ENCODE measurements at regions of chr6 and their contacts with region 1.

Region 1: GRCh38 chr6:30678964-30679726 is 6.3 kb upstream of the DHX16 start:
- DNase-seq: peak; percentile 91 to 93 (median 92)
- ATAC-seq: peak; percentile 75 to 85 (median 82)
- H3K4me3 ChIP-seq: peak overlapping the region; percentile 24 to 34 (median 26)
- H3K27ac ChIP-seq: peak overlapping the region; percentile 60 to 94 (median 84)
- H3K4me1 ChIP-seq: peaks cover 0 to 67% (median 28%) of the 10 kb centered on the region in 4 donors
- H3K27me3 ChIP-seq: no peaks in the 10 kb centered on the region
- CTCF ChIP-seq: peak; percentile 95 to 99 (median 97)
- POLR2A ChIP-seq: peak; percentile 36

Region 2: DNA sequence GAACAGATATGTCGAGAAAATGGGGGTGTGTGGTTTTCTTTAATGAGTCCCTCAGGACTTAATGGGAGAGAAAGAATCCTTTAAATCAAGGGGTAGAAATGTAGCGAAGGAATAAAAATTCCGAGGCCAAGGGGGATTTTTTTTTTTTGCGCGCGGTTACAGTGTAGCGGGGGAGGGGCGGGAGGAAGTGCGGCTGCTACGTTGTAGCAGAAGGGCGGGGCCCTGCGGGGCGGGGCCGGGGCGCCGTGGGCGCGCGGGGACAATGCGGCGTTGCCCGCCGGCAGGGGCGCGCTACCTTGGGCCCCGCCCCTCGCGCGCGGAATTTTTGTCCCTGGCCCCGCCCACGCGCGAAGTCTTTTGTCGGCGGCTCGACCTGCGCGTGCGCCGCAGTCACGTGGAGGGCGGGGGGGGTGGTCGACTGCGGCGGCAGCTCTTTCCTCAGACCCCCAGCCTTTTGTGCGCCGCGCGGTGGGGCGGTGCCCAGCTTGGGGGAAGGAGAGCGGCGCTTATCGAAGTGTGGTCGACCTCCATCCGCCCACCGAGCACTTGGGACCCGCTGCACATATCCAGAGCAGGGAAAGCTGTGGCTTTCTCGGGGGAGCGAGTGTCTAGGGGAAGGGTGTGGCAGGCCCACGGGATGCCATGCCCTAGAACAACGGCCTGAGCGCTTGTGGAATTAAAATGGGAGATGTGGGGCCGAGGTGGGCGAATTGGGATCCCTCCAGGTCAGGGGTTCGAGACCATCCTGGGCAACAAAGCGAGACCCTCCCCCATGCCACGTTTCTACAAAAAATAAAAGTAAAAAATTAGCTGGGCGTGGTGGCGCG is 42.3 kb after region 1 on chr6:
- intact Hi-C with region 1: loop called in 1 of 2 experiments (anchors 2 kb)
- DNase-seq: peak; percentile 93 to 94 (median 93)
- ATAC-seq: peak; percentile 60 to 70 (median 65)
- H3K4me3 ChIP-seq: peak overlapping the region; percentile 88 to 94 (median 91)
- H3K27ac ChIP-seq: peak overlapping the region; percentile 81 to 91 (median 90)
- H3K4me1 ChIP-seq: peaks cover 0 to 35% (median 16%) of the 10 kb centered on the region in 4 donors
- H3K27me3 ChIP-seq: no peaks in the 10 kb centered on the region
- CTCF ChIP-seq: peak; percentile 38 to 64 (median 46)
- POLR2A ChIP-seq: no peak

Region 3: DNA sequence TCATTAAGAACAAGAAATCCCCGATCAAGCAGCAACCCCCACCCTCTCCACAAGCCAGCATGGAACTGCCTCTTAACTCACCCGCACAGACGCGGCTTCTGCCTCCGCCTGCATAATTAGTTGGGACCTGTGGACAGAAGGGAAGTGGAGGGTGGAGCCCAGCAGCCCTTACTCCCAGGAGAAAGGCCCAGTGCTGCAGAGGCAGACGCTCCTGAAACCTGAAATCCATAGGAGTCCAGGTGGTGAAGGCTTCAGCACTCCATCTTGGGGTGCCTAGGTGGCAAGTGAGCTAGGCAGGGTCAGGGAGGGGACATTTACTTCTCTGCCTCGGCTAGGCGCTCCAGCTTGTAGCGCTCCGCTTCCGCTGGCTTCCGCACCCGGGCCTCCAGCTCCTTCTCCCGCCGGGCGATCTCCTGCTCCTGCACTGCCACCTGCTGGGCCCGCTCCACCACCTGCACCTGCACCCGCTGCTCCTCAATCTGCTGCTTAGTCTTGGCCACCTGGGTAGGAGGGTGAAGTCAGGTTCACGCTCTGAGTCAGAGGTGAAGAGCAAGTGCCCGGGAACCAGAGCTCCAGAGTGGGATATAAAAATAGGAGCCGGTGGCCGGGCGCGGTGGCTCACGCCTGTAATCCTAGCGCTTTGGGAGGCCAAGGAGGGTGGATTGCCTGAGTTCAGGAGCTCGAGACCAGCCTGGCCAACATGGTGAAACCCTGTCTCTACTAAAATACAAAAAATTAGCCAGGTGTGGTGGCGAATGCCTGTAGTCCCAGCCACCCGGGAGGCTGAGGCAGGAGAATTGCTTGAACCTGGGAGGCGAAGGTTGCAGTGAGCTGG is 51.7 kb after region 1 on chr6:
- intact Hi-C with region 1: loop called in 1 of 2 experiments (anchors 2 kb)
- DNase-seq: peak; percentile 83 to 88 (median 87)
- ATAC-seq: peak; percentile 93 to 99 (median 95)
- H3K4me3 ChIP-seq: no peak overlapping the region
- H3K27ac ChIP-seq: no peak overlapping the region
- H3K4me1 ChIP-seq: peaks cover 0 to 4% (median 0%) of the 10 kb centered on the region in 4 donors
- H3K27me3 ChIP-seq: no peaks in the 10 kb centered on the region
- CTCF ChIP-seq: peak; percentile 62 to 80 (median 74)
- POLR2A ChIP-seq: no peak

Region 4: DNA sequence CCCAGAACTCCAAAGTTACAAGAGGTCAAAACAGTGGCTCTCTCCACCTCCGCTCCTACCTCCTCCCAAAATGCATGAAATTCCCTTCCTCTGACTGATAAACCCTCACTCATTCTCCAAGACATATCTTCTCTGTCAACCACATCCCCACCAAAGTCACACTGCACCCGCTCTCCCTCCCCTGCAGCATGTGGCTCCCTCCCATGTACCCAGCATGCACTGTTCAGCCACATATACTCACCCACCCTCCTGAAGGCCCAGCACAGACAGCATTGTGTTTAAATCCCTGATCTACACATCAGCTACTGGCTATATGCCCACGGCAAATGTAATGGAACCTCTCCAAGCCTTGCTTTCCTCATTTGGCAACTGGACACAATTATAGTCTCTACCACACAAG is 496.8 kb after region 1 on chr6:
- intact Hi-C with region 1: no loop called
- DNase-seq: no peak
- ATAC-seq: no peak
- H3K4me3 ChIP-seq: no peak overlapping the region
- H3K27ac ChIP-seq: no peak overlapping the region
- H3K4me1 ChIP-seq: no peaks in the 10 kb centered on the region
- H3K27me3 ChIP-seq: no peaks in the 10 kb centered on the region
- CTCF ChIP-seq: no peak
- POLR2A ChIP-seq: no peak